ENCODE measurements at regions of chr19 and their contacts with region 1.

Region 1: DNA sequence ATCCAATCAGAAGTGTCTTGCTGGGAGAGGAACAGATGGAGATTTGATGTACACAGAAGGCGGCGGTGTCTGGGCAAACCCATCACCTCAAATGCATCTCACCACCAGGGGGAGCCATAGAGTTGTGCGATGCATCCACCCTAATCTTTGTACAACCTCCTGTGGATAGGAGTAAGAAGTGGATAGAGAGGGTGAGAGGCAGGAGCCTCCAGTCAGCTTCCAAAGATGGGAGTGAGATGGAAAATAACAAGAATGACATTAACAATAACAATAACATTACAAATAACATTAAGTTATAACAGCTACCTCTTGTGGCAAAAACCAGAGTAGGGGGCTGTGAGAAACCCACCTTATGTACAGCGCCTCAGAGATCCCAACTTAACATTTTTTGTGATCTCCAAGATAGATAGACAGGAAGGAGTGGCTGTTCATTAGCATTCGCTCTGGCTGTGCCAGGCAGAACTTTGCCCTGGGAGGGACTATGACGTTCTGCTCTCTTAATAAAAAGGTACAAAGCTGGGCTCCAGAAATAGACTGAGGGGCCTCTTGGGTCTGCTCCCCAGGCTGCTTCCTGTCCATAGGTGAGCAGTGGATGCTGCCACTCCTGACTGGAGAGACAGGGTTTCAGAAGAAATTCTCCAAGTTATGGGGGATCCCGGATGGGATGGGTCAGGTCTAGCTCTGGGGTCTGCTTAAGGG is 5.2 kb upstream of the CEACAM18 start:
- DNase-seq: peak; percentile 75 to 89
- ATAC-seq: peak; percentile 84 to 90 (median 85)
- H3K4me3 ChIP-seq: no peak overlapping the region
- H3K4me3 Mint-ChIP-seq: no peak overlapping the region
- H3K27ac ChIP-seq: no peak overlapping the region
- H3K27ac Mint-ChIP-seq: no peak overlapping the region
- H3K4me1 ChIP-seq: no peaks in the 10 kb centered on the region
- H3K4me1 Mint-ChIP-seq: peaks cover 0 to 7% of the 10 kb centered on the region in 2 donors
- H3K27me3 ChIP-seq: no peaks in the 10 kb centered on the region
- H3K27me3 Mint-ChIP-seq: peaks cover 16 to 32% of the 10 kb centered on the region in 2 donors
- CTCF ChIP-seq: peak; percentile 99

Region 2: GRCh38 chr19:51410950-51411748 is 62.0 kb before region 1 on chr19:
- intact Hi-C with region 1: no loop called
- DNase-seq: no peak
- ATAC-seq: no peak
- H3K4me3 ChIP-seq: no peak overlapping the region
- H3K4me3 Mint-ChIP-seq: no peak overlapping the region
- H3K27ac ChIP-seq: no peak overlapping the region
- H3K27ac Mint-ChIP-seq: no peak overlapping the region
- H3K4me1 ChIP-seq: peaks cover 21% of the 10 kb centered on the region
- H3K4me1 Mint-ChIP-seq: peaks cover 20 to 34% of the 10 kb centered on the region in 2 donors
- H3K27me3 ChIP-seq: no peaks in the 10 kb centered on the region
- H3K27me3 Mint-ChIP-seq: no peaks in the 10 kb centered on the region
- CTCF ChIP-seq: no peak

Region 3: DNA sequence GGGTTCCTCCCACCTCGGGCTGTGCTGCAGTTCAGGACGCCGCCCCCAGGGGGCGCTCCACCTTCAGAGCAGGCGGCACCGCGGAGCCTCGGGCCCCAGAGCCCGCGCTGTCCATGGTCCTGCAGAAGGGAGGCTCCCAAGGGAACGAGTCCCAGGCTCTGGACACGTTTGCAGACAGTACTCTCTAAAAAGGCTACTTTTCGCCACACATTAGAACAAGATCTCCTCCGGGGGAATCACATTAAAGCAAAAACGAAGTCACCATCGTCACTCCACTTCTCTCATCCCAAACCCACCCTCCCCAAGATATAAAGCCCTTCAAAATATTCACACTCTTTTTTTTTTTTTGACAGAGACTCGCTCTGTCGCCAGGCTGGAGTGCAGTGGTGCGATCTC is 51.1 kb before region 1 on chr19:
- intact Hi-C with region 1: loop called (anchors 5 kb)
- DNase-seq: peak; percentile 89 to 92
- ATAC-seq: peak; percentile 94 to 98 (median 95)
- H3K4me3 ChIP-seq: no peak overlapping the region
- H3K4me3 Mint-ChIP-seq: peak overlapping the region; percentile 74
- H3K27ac ChIP-seq: no peak overlapping the region
- H3K27ac Mint-ChIP-seq: peak overlapping the region in 1 of 2 donors; percentile 38
- H3K4me1 ChIP-seq: peaks cover 34% of the 10 kb centered on the region
- H3K4me1 Mint-ChIP-seq: peaks cover 15 to 20% of the 10 kb centered on the region in 2 donors
- H3K27me3 ChIP-seq: peaks cover 5% of the 10 kb centered on the region
- H3K27me3 Mint-ChIP-seq: peaks cover 16 to 17% of the 10 kb centered on the region in 2 donors
- CTCF ChIP-seq: peak; percentile 99

Region 4: DNA sequence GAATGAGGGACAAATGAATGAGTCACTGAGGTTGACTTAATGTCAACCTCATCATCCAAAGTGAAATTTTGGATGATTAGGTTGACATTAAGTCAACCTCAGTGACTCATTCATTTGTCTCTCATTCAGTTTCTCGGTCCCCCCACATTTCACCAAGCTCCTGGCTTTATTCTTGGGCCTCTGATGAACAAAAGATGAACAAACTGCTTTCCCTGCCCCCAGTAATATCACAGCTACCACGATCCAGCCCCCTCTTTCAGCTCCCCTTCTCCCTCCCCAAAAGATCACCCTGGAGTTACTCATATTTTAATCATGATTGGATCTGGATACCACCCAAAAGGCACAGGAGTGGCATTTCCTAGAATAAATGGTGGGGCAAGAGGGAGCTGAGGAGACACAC is 16.0 kb after region 1 on chr19:
- intact Hi-C with region 1: no loop called
- DNase-seq: no peak
- ATAC-seq: no peak
- H3K4me3 ChIP-seq: no peak overlapping the region
- H3K4me3 Mint-ChIP-seq: no peak overlapping the region
- H3K27ac ChIP-seq: no peak overlapping the region
- H3K27ac Mint-ChIP-seq: no peak overlapping the region
- H3K4me1 ChIP-seq: no peaks in the 10 kb centered on the region
- H3K4me1 Mint-ChIP-seq: no peaks in the 10 kb centered on the region
- H3K27me3 ChIP-seq: no peaks in the 10 kb centered on the region
- H3K27me3 Mint-ChIP-seq: peaks cover 21 to 22% of the 10 kb centered on the region in 2 donors
- CTCF ChIP-seq: no peak

Region 5: DNA sequence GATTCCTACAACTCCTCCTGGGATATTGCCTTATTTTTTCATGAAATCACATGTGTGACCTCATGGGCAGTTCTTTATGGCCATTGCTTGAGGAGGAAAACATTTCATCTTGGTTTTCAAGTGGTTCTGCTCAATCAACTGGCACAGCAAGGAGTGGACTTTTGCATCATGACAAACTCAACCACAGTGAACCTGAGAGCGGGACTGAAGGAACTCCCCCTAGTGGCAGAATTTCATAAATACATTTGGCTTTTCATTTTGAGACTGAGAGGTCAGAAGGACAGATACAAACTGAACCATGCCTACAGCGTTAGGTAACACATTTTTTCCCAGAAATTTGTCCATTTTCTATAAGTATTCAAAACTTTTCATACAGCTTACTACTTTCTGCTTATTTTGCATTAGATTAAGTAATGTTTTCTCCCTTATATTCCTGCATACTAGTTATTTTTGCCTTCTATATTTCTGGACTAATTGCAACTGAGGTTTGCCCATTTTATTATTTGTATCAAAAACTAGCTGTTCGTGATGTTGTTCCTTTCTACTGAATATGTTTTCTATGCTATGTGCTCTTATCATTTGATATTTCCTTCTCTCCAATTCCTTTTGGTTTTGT is 41.8 kb after region 1 on chr19:
- intact Hi-C with region 1: loop called (anchors 1 kb)
- DNase-seq: peak in 1 of 2 donors; percentile 73
- ATAC-seq: peak; percentile 60 to 76 (median 63)
- H3K4me3 ChIP-seq: no peak overlapping the region
- H3K4me3 Mint-ChIP-seq: no peak overlapping the region
- H3K27ac ChIP-seq: no peak overlapping the region
- H3K27ac Mint-ChIP-seq: no peak overlapping the region
- H3K4me1 ChIP-seq: no peaks in the 10 kb centered on the region
- H3K4me1 Mint-ChIP-seq: no peaks in the 10 kb centered on the region
- H3K27me3 ChIP-seq: peaks cover 3% of the 10 kb centered on the region
- H3K27me3 Mint-ChIP-seq: peaks cover 15 to 31% of the 10 kb centered on the region in 2 donors
- CTCF ChIP-seq: peak; percentile 79

Region 6: GRCh38 chr19:51637362-51637978 is 164.3 kb after region 1 on chr19:
- intact Hi-C with region 1: loop called (anchors 5 kb)
- DNase-seq: peak in 1 of 2 donors; percentile 25
- ATAC-seq: no peak
- H3K4me3 ChIP-seq: no peak overlapping the region
- H3K4me3 Mint-ChIP-seq: no peak overlapping the region
- H3K27ac ChIP-seq: no peak overlapping the region
- H3K27ac Mint-ChIP-seq: no peak overlapping the region
- H3K4me1 ChIP-seq: peaks cover 4% of the 10 kb centered on the region
- H3K4me1 Mint-ChIP-seq: peaks cover 0 to 10% of the 10 kb centered on the region in 2 donors
- H3K27me3 ChIP-seq: no peaks in the 10 kb centered on the region
- H3K27me3 Mint-ChIP-seq: peaks cover 12 to 38% of the 10 kb centered on the region in 2 donors
- CTCF ChIP-seq: peak; percentile 31

Region 7: GRCh38 chr19:51660975-51661600 is 187.9 kb after region 1 on chr19:
- intact Hi-C with region 1: loop called (anchors 1 kb)
- DNase-seq: peak; percentile 31 to 66
- ATAC-seq: peak in 2 of 3 donors; percentile 47 to 64
- H3K4me3 ChIP-seq: no peak overlapping the region
- H3K4me3 Mint-ChIP-seq: no peak overlapping the region
- H3K27ac ChIP-seq: no peak overlapping the region
- H3K27ac Mint-ChIP-seq: no peak overlapping the region
- H3K4me1 ChIP-seq: no peaks in the 10 kb centered on the region
- H3K4me1 Mint-ChIP-seq: peaks cover 7% of the 10 kb centered on the region in 2 donors
- H3K27me3 ChIP-seq: peaks cover 1% of the 10 kb centered on the region
- H3K27me3 Mint-ChIP-seq: peaks cover 29 to 52% of the 10 kb centered on the region in 2 donors
- CTCF ChIP-seq: peak; percentile 33

Region 8: GRCh38 chr19:51735759-51736449 is 262.7 kb after region 1 on chr19:
- intact Hi-C with region 1: no loop called
- DNase-seq: peak in 1 of 2 donors; percentile 17
- ATAC-seq: peak in 2 of 3 donors; percentile 60 to 93
- H3K4me3 ChIP-seq: no peak overlapping the region
- H3K4me3 Mint-ChIP-seq: no peak overlapping the region
- H3K27ac ChIP-seq: no peak overlapping the region
- H3K27ac Mint-ChIP-seq: no peak overlapping the region
- H3K4me1 ChIP-seq: no peaks in the 10 kb centered on the region
- H3K4me1 Mint-ChIP-seq: no peaks in the 10 kb centered on the region
- H3K27me3 ChIP-seq: no peaks in the 10 kb centered on the region
- H3K27me3 Mint-ChIP-seq: peaks cover 4 to 22% of the 10 kb centered on the region in 2 donors
- CTCF ChIP-seq: no peak